A673 (cell line): ENCODE measurements at regions of chr4 and their contacts with region 1.

Region 1: DNA sequence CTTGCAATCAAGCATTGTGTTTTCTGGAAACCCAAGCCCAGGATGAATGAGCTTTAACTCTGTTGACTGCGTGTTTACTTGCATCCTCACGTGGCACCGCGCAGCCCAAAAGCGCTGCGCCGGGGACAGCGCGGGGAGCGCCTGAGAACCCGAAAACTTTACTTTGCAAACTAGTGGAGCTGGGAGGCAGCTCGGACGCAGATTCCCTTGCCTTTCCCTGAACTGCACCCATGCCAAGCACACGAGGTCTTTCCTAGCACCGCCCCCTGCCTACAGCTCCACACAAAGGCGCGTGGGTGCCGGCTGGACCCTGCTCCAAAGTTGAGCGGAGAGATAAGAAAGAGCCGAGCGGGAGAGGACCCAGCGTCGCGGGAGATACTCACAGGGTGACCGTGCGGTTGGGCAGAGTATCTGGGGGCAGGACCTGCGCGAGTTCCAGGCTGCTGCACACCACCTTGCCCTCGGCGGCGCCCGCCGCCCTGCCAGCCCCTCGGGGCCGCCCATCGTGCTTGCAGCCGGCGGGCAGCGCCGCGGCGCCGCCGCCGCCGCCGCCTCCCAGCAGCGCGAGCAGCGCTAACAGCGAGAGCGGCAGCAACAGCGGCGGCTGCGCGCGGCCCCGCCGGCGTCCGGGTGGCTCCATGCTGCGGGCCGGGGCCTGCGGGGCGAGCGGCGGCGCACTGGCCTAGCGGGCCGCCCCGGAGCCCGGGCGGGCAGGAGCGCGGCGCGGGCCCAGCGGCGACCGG is 550 bp downstream of the ADGRA3 start:
- DNase-seq: peak; percentile 87
- H3K4me3 ChIP-seq: peak overlapping the region; percentile 62
- H3K27ac ChIP-seq: peak overlapping the region; percentile 71
- H3K4me1 ChIP-seq: peaks cover 14% of the 10 kb centered on the region
- H3K27me3 ChIP-seq: no peaks in the 10 kb centered on the region
- CTCF ChIP-seq: no peak

Region 2: GRCh38 chr4:22434895-22435294 is 80.4 kb before region 1 on chr4:
- CTCF ChIA-PET with region 1: no interaction called
- POLR2A ChIA-PET with region 1: no interaction called
- intact Hi-C with region 1: no loop called
- DNase-seq: peak; percentile 29
- H3K4me3 ChIP-seq: no peak overlapping the region
- H3K27ac ChIP-seq: no peak overlapping the region
- H3K4me1 ChIP-seq: no peaks in the 10 kb centered on the region
- H3K27me3 ChIP-seq: no peaks in the 10 kb centered on the region
- CTCF ChIP-seq: peak; percentile 37; the same call in 1 of the 2 replicates

Region 3: GRCh38 chr4:22616516-22616915 is 101.2 kb after region 1 on chr4:
- CTCF ChIA-PET with region 1: no interaction called
- POLR2A ChIA-PET with region 1: no interaction called
- intact Hi-C with region 1: no loop called
- DNase-seq: no peak
- H3K4me3 ChIP-seq: no peak overlapping the region
- H3K27ac ChIP-seq: no peak overlapping the region
- H3K4me1 ChIP-seq: no peaks in the 10 kb centered on the region
- H3K27me3 ChIP-seq: no peaks in the 10 kb centered on the region
- CTCF ChIP-seq: no peak

Region 4: GRCh38 chr4:22670956-22671355 is 155.6 kb after region 1 on chr4:
- CTCF ChIA-PET with region 1: no interaction called
- POLR2A ChIA-PET with region 1: no interaction called
- intact Hi-C with region 1: loop called (anchors 5 kb)
- DNase-seq: peak; percentile 7
- H3K4me3 ChIP-seq: no peak overlapping the region
- H3K27ac ChIP-seq: no peak overlapping the region
- H3K4me1 ChIP-seq: no peaks in the 10 kb centered on the region
- H3K27me3 ChIP-seq: no peaks in the 10 kb centered on the region
- CTCF ChIP-seq: no peak

Region 5: DNA sequence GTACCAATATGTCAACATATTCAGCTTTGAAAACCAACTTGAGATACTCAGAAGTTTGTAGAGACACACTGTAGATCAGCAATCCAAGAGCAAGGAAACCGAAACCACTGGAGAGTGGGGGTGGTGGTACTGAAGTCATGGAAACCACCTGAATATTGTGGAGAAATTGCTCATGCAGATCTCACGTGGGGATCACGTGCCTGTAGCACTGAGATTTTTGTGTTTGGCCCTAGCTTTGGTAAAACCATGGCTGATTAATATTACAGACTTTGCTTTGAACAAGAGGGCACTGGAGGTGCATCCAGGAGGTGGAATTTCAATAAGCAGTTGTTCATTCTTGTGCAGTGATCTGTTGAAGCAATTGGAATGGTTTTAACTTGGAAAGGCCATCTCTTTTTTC is 224.7 kb after region 1 on chr4:
- CTCF ChIA-PET with region 1: no interaction called
- POLR2A ChIA-PET with region 1: no interaction called
- intact Hi-C with region 1: no loop called
- DNase-seq: no peak
- H3K4me3 ChIP-seq: no peak overlapping the region
- H3K27ac ChIP-seq: no peak overlapping the region
- H3K4me1 ChIP-seq: no peaks in the 10 kb centered on the region
- H3K27me3 ChIP-seq: no peaks in the 10 kb centered on the region
- CTCF ChIP-seq: no peak